ENCODE measurements at regions of chr11 and their contacts with region 1.

Region 1: DNA sequence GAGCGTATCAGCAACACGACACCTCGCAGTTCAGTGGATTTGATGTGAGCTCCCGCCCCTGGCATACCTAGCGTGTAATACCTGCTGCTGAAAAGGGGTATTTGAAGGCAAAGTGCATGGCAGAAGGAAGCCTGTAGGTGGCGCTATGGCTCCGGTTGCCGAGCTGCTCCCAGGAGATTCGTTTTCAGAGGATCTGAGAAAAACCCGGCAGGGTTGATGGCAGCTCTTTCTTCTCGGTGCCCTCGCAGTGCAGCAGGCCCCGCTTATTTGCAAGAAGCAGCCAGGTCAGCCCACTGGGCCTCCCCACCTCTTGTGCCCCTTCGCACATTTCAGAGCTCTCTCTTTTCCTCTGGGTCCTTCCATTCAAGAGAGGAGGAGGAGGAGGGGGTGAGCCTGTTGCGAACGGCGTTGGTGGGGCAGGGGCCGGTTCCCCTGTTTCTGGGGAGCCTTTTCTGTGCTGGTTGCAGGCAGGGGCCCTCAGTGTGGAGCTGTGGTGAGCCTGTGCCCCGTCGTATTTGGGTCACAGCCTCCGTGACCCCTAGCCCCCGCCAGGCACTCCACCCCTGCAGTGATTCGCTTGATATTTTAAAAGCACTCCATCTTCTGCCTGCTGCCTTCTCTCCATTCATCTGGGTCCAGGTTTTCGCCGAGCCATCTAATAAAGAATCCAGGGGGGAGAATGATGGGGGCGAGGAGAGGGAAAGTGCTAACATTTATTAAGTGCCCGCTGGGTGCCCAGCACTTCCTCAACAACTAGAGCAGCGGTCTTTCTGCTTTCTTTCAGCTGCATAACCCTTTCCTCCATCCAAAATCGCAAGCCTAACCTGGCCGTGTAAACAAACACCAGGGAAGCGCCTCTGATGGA is 85.3 kb upstream of the SYT13 start:
- DNase-seq: peak in 4 of 5 donors; percentile 90 to 93 (median 92)
- H3K4me3 ChIP-seq: no peak overlapping the region
- H3K27ac ChIP-seq: no peak overlapping the region
- H3K4me1 ChIP-seq: peaks cover 0 to 3% (median 0%) of the 10 kb centered on the region in 3 donors
- H3K27me3 ChIP-seq: peaks cover 2% of the 10 kb centered on the region
- CTCF ChIP-seq: peak; percentile 87

Region 2: DNA sequence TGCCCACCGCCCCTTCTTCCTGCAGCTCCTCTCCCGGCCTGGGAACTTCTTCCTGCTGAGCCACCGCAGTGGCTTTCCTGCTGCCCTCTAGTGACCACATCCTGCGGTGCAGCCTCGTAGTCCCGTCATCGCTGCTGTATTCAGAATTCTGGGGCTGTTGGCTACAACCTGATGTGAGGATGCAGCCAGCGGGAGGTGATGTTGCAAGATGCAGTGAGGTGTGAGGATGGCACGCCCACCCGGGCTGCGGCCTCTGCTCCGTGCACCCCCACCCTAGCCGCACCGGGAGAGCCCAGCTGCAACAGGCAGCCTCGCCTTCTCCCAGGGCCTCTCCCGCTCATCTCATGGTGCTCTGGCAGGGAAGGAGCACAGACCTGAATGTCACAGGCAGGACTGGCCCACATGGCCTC is 283.9 kb after region 1 on chr11:
- intact Hi-C with region 1: loop called (anchors 10 kb)
- DNase-seq: peak; percentile 87 to 94 (median 91)
- H3K4me3 ChIP-seq: no peak overlapping the region
- H3K27ac ChIP-seq: no peak overlapping the region
- H3K4me1 ChIP-seq: peaks cover 0 to 6% (median 0%) of the 10 kb centered on the region in 3 donors
- H3K27me3 ChIP-seq: no peaks in the 10 kb centered on the region
- CTCF ChIP-seq: peak; percentile 90

Region 3: GRCh38 chr11:45736424-45736823 is 364.9 kb after region 1 on chr11:
- intact Hi-C with region 1: no loop called
- DNase-seq: no peak
- H3K4me3 ChIP-seq: no peak overlapping the region
- H3K27ac ChIP-seq: no peak overlapping the region
- H3K4me1 ChIP-seq: no peaks in the 10 kb centered on the region
- H3K27me3 ChIP-seq: no peaks in the 10 kb centered on the region
- CTCF ChIP-seq: no peak

Region 4: DNA sequence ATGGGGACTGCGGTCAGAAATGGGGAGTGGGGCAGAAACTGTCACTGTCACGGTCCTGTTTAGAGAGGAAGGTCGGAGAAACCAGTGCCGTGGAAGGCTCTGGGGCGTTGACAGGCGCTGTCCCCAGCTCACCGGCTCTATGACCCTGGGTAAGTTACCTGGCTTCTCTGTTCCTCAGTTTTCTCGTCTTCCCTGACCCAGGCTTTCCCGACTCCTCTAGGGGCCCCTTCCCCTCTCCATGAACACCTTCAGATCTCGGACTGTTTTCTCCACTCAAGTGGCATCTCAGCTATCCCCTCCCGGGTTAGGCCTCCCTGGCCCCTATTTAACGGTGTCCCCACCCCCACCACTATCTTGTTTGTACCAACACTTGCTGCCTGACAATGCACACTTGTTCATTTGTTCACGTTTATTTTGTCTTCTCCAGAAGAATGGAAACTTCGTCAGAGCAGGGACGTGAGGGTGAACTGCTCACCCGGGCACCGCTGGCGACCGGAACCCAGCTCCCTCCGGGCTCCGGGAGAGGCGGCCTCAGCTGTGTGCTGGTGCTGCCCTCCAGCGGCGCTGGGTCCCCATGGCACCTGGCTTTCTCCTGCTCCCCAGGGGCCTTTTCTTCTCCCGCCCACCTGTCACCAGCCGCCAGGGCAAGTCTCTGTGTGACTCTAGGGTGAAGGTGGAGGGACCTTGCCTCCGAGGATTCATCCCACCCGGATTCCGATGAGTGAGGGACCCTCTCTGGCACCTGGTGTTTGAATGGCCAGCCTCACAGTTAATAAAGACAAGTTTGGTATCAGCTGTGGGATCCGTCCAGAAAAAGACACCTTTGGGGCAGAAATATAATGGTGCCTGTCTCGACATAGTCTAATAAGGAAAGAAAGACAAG is 400.3 kb after region 1 on chr11:
- intact Hi-C with region 1: loop called (anchors 10 kb)
- DNase-seq: peak; percentile 88 to 94 (median 88)
- H3K4me3 ChIP-seq: peak overlapping the region; percentile 51 to 91 (median 76)
- H3K27ac ChIP-seq: peak overlapping the region; percentile 41 to 48
- H3K4me1 ChIP-seq: peaks cover 0 to 6% (median 0%) of the 10 kb centered on the region in 3 donors
- H3K27me3 ChIP-seq: no peaks in the 10 kb centered on the region
- CTCF ChIP-seq: peak; percentile 91

Measured in kidney (tissue), 22 donors.